Activated CD4-positive, alpha-beta T cell treated with anti-CD3 and anti-CD28 coated beads for 36 hours (primary cell): ENCODE measurements at regions of chr17 and their contacts with region 1.

Region 1: GRCh38 chr17:16438557-16439302 is 23.4 kb downstream of the TRPV2 start:
- DNase-seq: peak; percentile 97
- ATAC-seq: peak; percentile 91
- H3K4me3 Mint-ChIP-seq: peak overlapping the region; percentile 99
- H3K27ac Mint-ChIP-seq: peak overlapping the region; percentile 99
- H3K4me1 Mint-ChIP-seq: peaks cover 40% of the 10 kb centered on the region
- H3K27me3 Mint-ChIP-seq: no peaks in the 10 kb centered on the region

Region 2: GRCh38 chr17:16232391-16232790 is 206.3 kb before region 1 on chr17:
- CTCF ChIA-PET with region 1: no interaction called
- POLR2A ChIA-PET with region 1: no interaction called
- intact Hi-C with region 1: loop called in 1 of 2 experiments (anchors 1 kb)
- DNase-seq: no peak
- ATAC-seq: no peak
- H3K4me3 Mint-ChIP-seq: no peak overlapping the region
- H3K27ac Mint-ChIP-seq: no peak overlapping the region
- H3K4me1 Mint-ChIP-seq: peaks cover 22% of the 10 kb centered on the region
- H3K27me3 Mint-ChIP-seq: no peaks in the 10 kb centered on the region

Region 3: GRCh38 chr17:16363749-16364536 is 74.8 kb before region 1 on chr17:
- CTCF ChIA-PET with region 1: interaction called, 13 read pairs
- POLR2A ChIA-PET with region 1: interaction called, 3 read pairs
- intact Hi-C with region 1: loop called in 1 of 2 experiments (anchors 5 kb)
- DNase-seq: peak; percentile 89
- ATAC-seq: peak; percentile 98
- H3K4me3 Mint-ChIP-seq: no peak overlapping the region
- H3K27ac Mint-ChIP-seq: no peak overlapping the region
- H3K4me1 Mint-ChIP-seq: no peaks in the 10 kb centered on the region
- H3K27me3 Mint-ChIP-seq: no peaks in the 10 kb centered on the region

Region 4: GRCh38 chr17:16491703-16492612 is 53.2 kb after region 1 on chr17 and contains the start of gene LRRC75A:
- CTCF ChIA-PET with region 1: interaction called, 3 read pairs
- POLR2A ChIA-PET with region 1: interaction called, 5 read pairs
- intact Hi-C with region 1: loop called in 1 of 2 experiments (anchors 1 kb)
- DNase-seq: peak; percentile 72
- ATAC-seq: peak; percentile 87
- H3K4me3 Mint-ChIP-seq: peak within 1 kb of the TSS; percentile 66
- H3K27ac Mint-ChIP-seq: no peak within 1 kb of the TSS
- H3K4me1 Mint-ChIP-seq: peaks cover 5% of the 10 kb centered on the region
- H3K27me3 Mint-ChIP-seq: peaks cover 9% of the 10 kb centered on the region
- total RNA-seq, gene LRRC75A: 1.1 to 1.2 TPM

Region 5: DNA sequence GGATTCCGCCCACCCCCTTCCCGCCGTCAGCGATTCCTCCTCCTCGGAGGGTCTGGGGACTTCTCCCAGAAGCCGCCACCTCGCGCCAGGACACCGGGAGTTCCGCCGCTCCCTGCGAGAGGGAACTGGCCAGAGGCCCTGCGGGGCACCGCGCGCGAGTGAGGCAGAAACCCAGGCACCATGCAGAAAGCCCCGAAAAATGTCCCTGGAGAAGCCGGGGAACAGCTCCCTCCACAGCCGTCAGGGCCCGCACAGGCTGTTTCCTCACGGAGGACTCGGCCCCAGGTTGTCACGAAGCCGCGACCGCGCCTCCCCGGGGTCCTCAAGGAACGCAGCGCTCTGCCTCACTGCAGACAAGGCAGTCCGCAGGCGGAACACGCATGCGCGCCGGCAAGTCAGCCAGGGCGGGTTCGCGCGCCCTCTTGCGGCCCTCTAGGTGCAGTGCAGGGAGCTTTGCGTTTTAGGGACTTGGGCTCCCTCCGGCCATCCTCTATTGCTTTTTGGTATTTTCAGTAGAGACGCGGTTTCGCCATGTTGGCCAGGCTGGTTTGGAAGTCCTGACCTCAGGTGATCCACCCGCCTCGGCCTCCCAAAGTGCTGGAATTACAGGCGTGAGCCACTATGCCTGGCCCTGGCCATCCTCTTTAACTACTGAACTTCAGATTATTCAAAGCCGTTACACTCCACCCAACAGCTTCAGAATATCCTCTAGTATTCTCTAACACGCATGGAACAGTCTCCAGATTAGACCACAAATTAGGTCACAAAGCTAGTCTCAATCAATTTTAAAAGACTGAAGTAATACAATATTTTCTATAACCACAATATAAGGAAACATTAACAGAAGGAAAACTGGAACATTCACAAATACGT is 150.6 kb after region 1 on chr17:
- CTCF ChIA-PET with region 1: interaction called, 4 read pairs
- POLR2A ChIA-PET with region 1: no interaction called
- intact Hi-C with region 1: loop called in 1 of 2 experiments (anchors 2 kb)
- DNase-seq: peak; percentile 95
- ATAC-seq: peak; percentile 90
- H3K4me3 Mint-ChIP-seq: peak overlapping the region; percentile 64
- H3K27ac Mint-ChIP-seq: no peak overlapping the region
- H3K4me1 Mint-ChIP-seq: peaks cover 8% of the 10 kb centered on the region
- H3K27me3 Mint-ChIP-seq: peaks cover 34% of the 10 kb centered on the region